ENCODE measurements at regions of chr1 and their contacts with region 1.

Region 1: DNA sequence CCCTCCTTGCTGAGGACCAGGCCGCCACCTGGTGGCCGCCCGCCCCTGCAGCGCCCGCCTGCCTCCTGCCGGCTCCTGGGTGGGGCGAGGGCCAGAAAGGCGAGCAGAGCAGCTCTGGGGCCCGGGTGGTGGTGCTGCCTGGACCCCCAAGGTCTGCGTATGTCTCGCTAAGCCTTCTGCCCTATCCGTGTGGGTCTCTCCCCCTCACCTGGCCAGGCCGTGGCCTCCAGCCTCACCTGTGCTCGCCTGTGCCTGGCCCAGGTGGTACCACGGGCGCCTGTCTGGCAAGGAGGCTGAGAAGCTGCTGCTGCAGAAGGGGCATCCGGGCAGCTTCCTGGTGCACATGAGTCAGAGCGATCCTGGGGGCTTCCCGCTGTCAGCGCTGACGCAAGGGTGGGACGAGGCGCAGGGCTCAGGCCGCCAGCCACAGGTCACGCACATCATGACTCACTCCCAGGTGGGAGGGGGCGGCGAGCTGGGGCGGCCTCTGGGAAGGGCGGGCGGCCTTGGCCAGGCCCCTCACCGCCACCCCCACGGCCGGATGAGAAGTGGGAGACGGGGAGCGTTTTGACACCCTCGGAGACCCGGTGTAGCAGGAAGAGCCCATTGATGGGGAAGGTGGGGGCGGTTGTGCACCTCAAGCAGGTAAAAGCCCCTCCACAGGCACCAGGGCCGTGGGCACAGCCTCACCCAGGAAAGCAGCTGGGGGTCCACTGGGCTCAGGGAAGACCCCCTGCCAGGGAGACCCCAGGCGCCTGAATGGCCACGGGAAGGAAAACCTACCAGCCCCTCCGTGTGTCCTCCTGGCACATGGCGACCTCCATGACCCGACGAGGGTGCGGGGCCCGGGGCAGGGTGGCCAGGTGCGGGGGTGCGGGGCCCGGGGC is 9.9 kb downstream of the RNF223 start:
- DNase-seq: no peak
- H3K4me3 ChIP-seq: no peak overlapping the region
- H3K27ac ChIP-seq: no peak overlapping the region
- H3K4me1 ChIP-seq: peaks cover 27 to 51% (median 44%) of the 10 kb centered on the region in 4 donors
- H3K27me3 ChIP-seq: peaks cover 7 to 89% (median 46%) of the 10 kb centered on the region in 4 donors
- CTCF ChIP-seq: peak; percentile 88 to 95 (median 91)
- EP300 ChIP-seq: no peak
- POLR2A ChIP-seq: no peak

Region 2: GRCh38 chr1:983799-984473 is 80.3 kb before region 1 on chr1:
- intact Hi-C with region 1: loop called (anchors 2 kb)
- DNase-seq: no peak
- H3K4me3 ChIP-seq: peak overlapping the region in 3 of 4 donors; percentile 22 to 42 (median 28)
- H3K27ac ChIP-seq: no peak overlapping the region
- H3K4me1 ChIP-seq: peaks cover 4 to 8% (median 7%) of the 10 kb centered on the region in 4 donors
- H3K27me3 ChIP-seq: peaks cover 0 to 61% (median 3%) of the 10 kb centered on the region in 4 donors
- CTCF ChIP-seq: peak; percentile 70 to 99 (median 91)
- EP300 ChIP-seq: no peak
- POLR2A ChIP-seq: no peak

Region 3: DNA sequence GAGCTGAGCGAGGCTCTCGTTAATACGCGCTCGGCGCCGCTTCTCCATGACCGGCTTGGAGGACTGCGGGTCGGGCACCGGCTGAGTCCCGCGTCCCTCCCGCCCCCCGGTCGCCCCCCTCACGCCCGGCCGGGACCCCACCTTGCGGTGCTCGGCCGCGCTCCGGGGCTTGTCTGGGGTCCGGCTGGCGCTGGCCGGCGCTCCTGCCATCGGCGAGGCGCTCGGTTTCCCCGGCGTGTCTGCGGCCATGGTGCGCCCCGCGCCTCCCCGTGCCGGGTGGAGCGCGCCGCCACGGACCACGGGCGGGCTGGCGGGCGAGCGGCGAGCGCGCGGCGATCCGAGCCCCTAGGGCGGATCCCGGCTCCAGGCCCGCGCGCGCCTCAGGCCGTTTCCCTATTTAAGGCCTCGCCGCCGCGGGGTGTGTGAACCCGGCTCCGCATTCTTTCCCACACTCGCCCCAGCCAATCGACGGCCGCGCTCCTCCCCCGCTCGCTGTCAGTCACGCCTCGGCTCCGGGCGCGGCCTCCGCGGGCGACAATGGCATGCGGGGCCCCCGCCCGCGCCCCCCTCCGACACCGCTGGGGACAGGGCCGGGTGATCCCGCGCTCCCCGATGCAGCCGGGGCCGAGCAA is 64.3 kb before region 1 on chr1 and contains the start of gene HES4:
- intact Hi-C with region 1: no loop called
- DNase-seq: peak; percentile 96
- H3K4me3 ChIP-seq: peak within 1 kb of the TSS; percentile 74 to 83 (median 82)
- H3K27ac ChIP-seq: peak within 1 kb of the TSS; percentile 97 to 100 (median 99)
- H3K4me1 ChIP-seq: peaks cover 24 to 59% (median 49%) of the 10 kb centered on the region in 4 donors
- H3K27me3 ChIP-seq: peaks cover 0 to 56% (median 0%) of the 10 kb centered on the region in 4 donors
- CTCF ChIP-seq: no peak
- EP300 ChIP-seq: no peak
- POLR2A ChIP-seq: peak; percentile 26
- total RNA-seq, gene HES4: 37.8 to 90.4 (median 65.0) TPM

Region 4: GRCh38 chr1:1019122-1019999 is 44.8 kb before region 1 on chr1:
- intact Hi-C with region 1: no loop called
- DNase-seq: no peak
- H3K4me3 ChIP-seq: peak overlapping the region; percentile 80 to 90 (median 84)
- H3K27ac ChIP-seq: peak overlapping the region; percentile 93 to 96 (median 96)
- H3K4me1 ChIP-seq: peaks cover 27 to 62% (median 44%) of the 10 kb centered on the region in 4 donors
- H3K27me3 ChIP-seq: no peaks in the 10 kb centered on the region
- CTCF ChIP-seq: peak; percentile 55 to 75 (median 64)
- EP300 ChIP-seq: no peak
- POLR2A ChIP-seq: no peak

Measured in esophagus muscularis mucosa (tissue), 4 donors.